Dorsolateral prefrontal cortex (tissue), 120 donors: ENCODE measurements at regions of chr7 and their contacts with region 1.

Region 1: GRCh38 chr7:143901668-143902331 is at the start of gene TCAF1:
- DNase-seq: peak; percentile 93 to 97 (median 96)
- H3K4me3 ChIP-seq: peak within 1 kb of the TSS; percentile 61 to 97 (median 87)
- H3K27ac ChIP-seq: peak within 1 kb of the TSS; percentile 52 to 98 (median 93)
- H3K27me3 ChIP-seq: no peaks in the 10 kb centered on the region
- CTCF ChIP-seq: peak in 48 of 56 donors; percentile 3 to 61 (median 40)
- total RNA-seq, gene TCAF1: 58.6 to 158 (median 116) TPM

Region 2: DNA sequence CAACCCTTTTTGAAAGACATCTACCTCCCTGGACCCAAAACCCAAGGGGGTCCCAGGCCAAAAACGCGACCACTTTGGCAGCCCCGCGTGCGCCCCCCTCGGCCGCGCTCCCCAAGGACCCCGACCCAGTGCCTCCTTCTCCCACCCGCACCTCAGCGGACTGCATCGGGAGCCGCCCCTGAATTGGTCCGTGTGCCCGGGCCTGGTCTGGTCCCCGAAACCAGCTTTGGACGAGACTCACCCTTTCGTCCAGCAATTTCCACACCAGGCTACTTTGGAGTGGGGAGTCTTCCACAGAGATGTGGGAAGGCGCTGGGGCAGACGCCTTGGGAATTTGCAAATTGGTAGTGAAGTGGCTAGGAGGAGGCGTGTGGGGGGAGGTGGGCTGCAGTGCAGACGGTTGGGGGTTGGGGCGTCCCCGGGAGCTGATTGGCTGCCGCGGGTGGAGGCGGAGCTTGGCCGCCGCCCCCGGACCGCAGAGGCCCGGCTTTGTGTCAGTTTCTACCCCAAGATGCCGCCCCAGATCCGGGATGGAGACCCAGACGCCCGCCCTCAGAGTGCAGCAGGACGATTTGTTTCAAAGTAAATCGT is 16.7 kb before region 1 on chr7:
- intact Hi-C with region 1: loop called (anchors 1 to 2 kb)
- DNase-seq: peak; percentile 76 to 93 (median 88)
- H3K4me3 ChIP-seq: peak overlapping the region; percentile 57 to 89 (median 78)
- H3K27ac ChIP-seq: peak overlapping the region; percentile 19 to 95 (median 82)
- H3K27me3 ChIP-seq: no peaks in the 10 kb centered on the region
- CTCF ChIP-seq: peak in 19 of 56 donors; percentile 2 to 56 (median 25)

Region 3: DNA sequence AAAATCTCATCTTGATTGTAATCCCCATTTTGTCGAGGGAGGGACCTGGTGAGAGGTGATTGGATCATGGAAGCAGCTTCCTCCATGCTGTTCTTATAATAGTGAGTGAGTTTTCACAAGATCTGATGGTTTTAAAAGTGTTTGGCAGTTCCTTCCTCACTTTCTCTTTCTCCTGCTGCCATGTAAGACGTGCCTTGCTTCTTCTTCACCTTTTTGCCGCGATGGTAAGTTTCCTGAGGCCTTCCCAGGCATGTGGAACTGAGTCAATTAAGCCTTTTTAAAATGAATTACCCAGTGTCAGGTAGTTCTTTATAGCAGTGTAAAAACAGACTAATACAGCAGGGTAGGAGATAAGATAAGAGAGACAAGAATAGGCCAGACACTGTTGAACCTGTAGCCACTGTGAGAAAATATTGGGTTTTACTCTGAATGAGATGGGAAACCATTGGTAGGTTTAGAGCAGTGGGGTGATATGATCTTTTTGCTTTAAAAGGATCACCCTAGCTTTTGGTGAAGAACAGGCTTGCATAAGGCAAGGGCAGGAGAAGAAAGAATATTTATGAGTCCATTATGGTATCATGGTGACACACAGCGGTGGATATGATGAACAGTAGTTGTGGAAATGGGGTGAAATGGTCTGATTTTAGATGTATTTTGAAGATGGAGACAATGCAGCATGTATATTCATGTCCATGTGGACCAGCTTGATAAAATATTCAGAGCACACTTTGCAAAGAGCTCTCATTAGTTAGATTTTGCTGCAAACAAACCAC is 109.8 kb after region 1 on chr7:
- intact Hi-C with region 1: no loop called
- DNase-seq: no peak
- H3K4me3 ChIP-seq: no peak overlapping the region
- H3K27ac ChIP-seq: no peak overlapping the region
- H3K27me3 ChIP-seq: no peaks in the 10 kb centered on the region
- CTCF ChIP-seq: peak in 3 of 56 donors; percentile 22 to 26 (median 24)

Region 4: GRCh38 chr7:144027070-144027469 is 125.3 kb after region 1 on chr7:
- intact Hi-C with region 1: loop called in 1 of 2 experiments (anchors 10 kb)
- DNase-seq: no peak
- H3K4me3 ChIP-seq: no peak overlapping the region
- H3K27ac ChIP-seq: no peak overlapping the region
- H3K27me3 ChIP-seq: no peaks in the 10 kb centered on the region
- CTCF ChIP-seq: peak in 55 of 56 donors; percentile 17 to 79 (median 56)